ENCODE measurements at regions of chr20 and their contacts with region 1.

Region 1: GRCh38 chr20:15267935-15268334 is 930.5 kb upstream of the FLRT3 start:
- DNase-seq: no peak
- ATAC-seq: no peak

Region 2: DNA sequence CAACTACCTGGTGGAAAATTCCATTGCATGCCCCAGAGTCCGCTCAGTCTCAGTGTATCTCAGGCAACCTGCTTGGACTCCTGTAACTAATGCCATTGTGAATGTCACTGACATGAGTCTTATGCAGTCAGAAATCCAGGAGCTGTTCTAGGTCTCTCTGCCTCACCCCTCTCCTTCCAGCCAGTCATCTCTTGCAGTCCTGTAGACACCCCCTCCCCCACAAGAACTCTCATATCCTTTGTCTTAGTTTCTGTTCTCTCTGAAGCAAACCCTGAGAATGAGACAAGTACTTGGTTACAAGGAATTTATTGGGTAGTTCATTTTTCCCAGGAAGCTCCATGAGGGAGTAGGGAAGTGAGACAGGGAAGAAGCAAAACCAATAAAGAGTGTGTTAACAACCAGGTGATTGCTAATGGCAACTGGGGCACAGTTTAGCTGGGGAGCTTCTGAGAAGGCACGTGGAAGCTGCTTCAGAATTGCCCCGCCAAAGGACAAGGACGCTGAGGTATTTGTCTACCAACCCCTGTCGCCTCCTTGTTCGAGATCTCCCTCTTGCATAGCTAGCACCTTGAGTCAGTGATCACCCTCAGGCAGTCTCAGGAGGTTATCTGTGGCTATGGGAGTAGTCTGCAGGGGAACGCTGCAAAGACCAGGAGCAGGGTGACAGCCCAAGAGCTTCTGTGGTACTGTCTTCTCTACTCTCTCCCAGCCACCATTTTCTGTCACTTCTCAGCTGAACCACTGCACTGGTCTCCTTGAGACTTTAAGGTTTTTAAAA is 19.1 kb before region 1 on chr20:
- intact Hi-C with region 1: loop called (anchors 1 kb)
- DNase-seq: no peak
- ATAC-seq: no peak

Region 3: GRCh38 chr20:15343043-15343523 is 75.1 kb after region 1 on chr20:
- intact Hi-C with region 1: no loop called
- DNase-seq: no peak
- ATAC-seq: no peak

Measured in left ventricle myocardium superior (tissue), 1 donor.